B cell (primary cell): ENCODE measurements at regions of chr11 and their contacts with region 1.

Region 1: GRCh38 chr11:111185266-111185665 is 60.3 kb upstream of the POU2AF2 start:
- DNase-seq: peak; percentile 22
- ATAC-seq: no peak
- H3K4me3 ChIP-seq: peak overlapping the region in 1 of 5 experiments; percentile 4
- H3K4me3 Mint-ChIP-seq: peak overlapping the region; percentile 42
- H3K27ac ChIP-seq: peak overlapping the region; percentile 59 to 80
- H3K27ac Mint-ChIP-seq: peak overlapping the region; percentile 80
- H3K4me1 ChIP-seq: peaks cover 45 to 51% of the 10 kb centered on the region in 2 donors
- H3K4me1 Mint-ChIP-seq: peaks cover 66% of the 10 kb centered on the region
- H3K27me3 ChIP-seq: no peaks in the 10 kb centered on the region
- H3K27me3 Mint-ChIP-seq: no peaks in the 10 kb centered on the region
- CTCF ChIP-seq: no peak

Region 2: GRCh38 chr11:111137846-111138245 is 47.4 kb before region 1 on chr11:
- CTCF ChIA-PET with region 1: no interaction called
- POLR2A ChIA-PET with region 1: no interaction called
- intact Hi-C with region 1: no loop called
- DNase-seq: no peak
- ATAC-seq: no peak
- H3K4me3 ChIP-seq: no peak overlapping the region
- H3K4me3 Mint-ChIP-seq: no peak overlapping the region
- H3K27ac ChIP-seq: no peak overlapping the region
- H3K27ac Mint-ChIP-seq: no peak overlapping the region
- H3K4me1 ChIP-seq: peaks cover 0 to 4% of the 10 kb centered on the region in 2 donors
- H3K4me1 Mint-ChIP-seq: peaks cover 8% of the 10 kb centered on the region
- H3K27me3 ChIP-seq: no peaks in the 10 kb centered on the region
- H3K27me3 Mint-ChIP-seq: no peaks in the 10 kb centered on the region
- CTCF ChIP-seq: no peak

Region 3: GRCh38 chr11:111153194-111153593 is 32.1 kb before region 1 on chr11:
- CTCF ChIA-PET with region 1: no interaction called
- POLR2A ChIA-PET with region 1: no interaction called
- intact Hi-C with region 1: loop called (anchors 5 kb)
- DNase-seq: no peak
- ATAC-seq: no peak
- H3K4me3 ChIP-seq: no peak overlapping the region
- H3K4me3 Mint-ChIP-seq: no peak overlapping the region
- H3K27ac ChIP-seq: no peak overlapping the region
- H3K27ac Mint-ChIP-seq: no peak overlapping the region
- H3K4me1 ChIP-seq: no peaks in the 10 kb centered on the region
- H3K4me1 Mint-ChIP-seq: peaks cover 11% of the 10 kb centered on the region
- H3K27me3 ChIP-seq: no peaks in the 10 kb centered on the region
- H3K27me3 Mint-ChIP-seq: no peaks in the 10 kb centered on the region
- CTCF ChIP-seq: no peak

Region 4: DNA sequence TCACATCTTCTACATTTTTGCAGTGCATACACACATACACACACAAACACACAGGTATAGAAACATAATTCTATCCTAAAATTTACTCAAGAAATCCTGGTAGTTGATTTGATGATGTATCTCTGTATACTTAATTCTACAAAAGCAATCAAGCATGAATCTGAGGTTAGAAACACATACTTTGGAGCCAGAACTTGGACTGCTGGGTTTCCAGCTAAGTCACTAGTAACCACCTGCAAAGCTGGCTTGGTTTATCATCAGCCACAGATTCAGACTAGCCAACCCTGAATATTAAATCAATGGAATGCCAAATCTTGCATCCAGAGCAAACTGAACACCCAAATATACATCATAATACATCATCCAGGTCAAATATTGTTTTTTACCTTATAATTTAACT is 35.5 kb after region 1 on chr11:
- CTCF ChIA-PET with region 1: no interaction called
- POLR2A ChIA-PET with region 1: no interaction called
- intact Hi-C with region 1: no loop called
- DNase-seq: no peak
- ATAC-seq: no peak
- H3K4me3 ChIP-seq: no peak overlapping the region
- H3K4me3 Mint-ChIP-seq: no peak overlapping the region
- H3K27ac ChIP-seq: no peak overlapping the region
- H3K27ac Mint-ChIP-seq: no peak overlapping the region
- H3K4me1 ChIP-seq: peaks cover 6 to 10% of the 10 kb centered on the region in 2 donors
- H3K4me1 Mint-ChIP-seq: peaks cover 25% of the 10 kb centered on the region
- H3K27me3 ChIP-seq: no peaks in the 10 kb centered on the region
- H3K27me3 Mint-ChIP-seq: no peaks in the 10 kb centered on the region
- CTCF ChIP-seq: no peak